RWPE1 (cell line): ENCODE measurements at regions of chr12 and their contacts with region 1.

Region 1: DNA sequence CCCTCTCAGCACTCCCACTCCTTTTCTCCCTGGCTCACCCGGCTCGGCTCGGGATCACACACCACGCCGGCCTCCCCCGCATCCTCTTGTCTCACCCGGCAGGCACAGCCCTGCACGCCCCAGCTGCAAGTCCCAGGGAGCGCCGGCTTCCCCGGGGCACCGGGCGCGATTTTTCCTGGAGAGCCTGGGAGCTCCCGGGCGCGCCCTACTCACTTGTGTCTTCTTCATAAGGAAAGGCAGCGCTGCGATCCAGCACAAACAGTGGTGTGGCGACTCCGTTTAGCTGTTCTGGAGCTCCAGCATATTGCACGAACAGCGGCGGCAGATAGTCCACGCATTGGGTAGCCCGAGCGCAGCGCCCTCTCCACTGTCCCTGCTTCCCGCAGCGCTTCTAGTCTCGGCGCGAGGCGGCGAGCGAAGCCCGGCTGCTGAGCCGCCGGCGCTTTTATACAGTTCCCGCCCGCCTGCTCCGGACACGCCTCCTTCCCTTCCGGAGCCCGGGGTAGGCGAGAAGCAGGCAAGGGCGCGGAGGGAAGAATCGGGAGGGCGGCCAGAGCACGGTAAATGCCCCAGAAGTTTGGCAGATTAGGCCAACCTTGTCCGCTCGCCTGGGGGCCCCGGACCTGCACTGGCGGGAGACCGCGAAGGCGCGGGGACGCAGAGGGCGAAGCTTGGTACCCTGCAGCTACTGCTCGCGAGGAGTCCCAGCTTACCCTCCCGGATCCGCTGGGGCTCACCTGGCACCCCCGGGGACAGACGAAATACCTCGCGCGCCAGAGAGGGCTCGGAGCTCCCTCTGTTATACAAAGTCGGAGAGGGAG is at the start of gene KITLG:
- DNase-seq: peak; percentile 76
- H3K27ac ChIP-seq: peak within 1 kb of the TSS; percentile 89
- CTCF ChIP-seq: peak; percentile 55

Region 2: GRCh38 chr12:88501972-88502938 is 78.0 kb before region 1 on chr12:
- CTCF ChIA-PET with region 1: no interaction called
- POLR2A ChIA-PET with region 1: no interaction called
- DNase-seq: peak; percentile 8
- H3K27ac ChIP-seq: no peak overlapping the region
- CTCF ChIP-seq: no peak

Region 3: GRCh38 chr12:88993651-88994050 is 413.4 kb after region 1 on chr12:
- CTCF ChIA-PET with region 1: interaction called, 16 read pairs
- POLR2A ChIA-PET with region 1: no interaction called
- DNase-seq: peak; percentile 30
- H3K27ac ChIP-seq: no peak overlapping the region
- CTCF ChIP-seq: peak; percentile 51